Naive thymus-derived CD4-positive, alpha-beta T cell (primary cell): ENCODE measurements at regions of chr5 and their contacts with region 1.

Region 1: GRCh38 chr5:170327168-170327567 is 29.6 kb upstream of the LCP2 start:
- DNase-seq: no peak
- ATAC-seq: no peak
- H3K4me3 ChIP-seq: no peak overlapping the region
- H3K4me3 Mint-ChIP-seq: no peak overlapping the region
- H3K27ac ChIP-seq: no peak overlapping the region
- H3K27ac Mint-ChIP-seq: no peak overlapping the region
- H3K4me1 ChIP-seq: peaks cover 49 to 54% of the 10 kb centered on the region in 2 donors
- H3K4me1 Mint-ChIP-seq: peaks cover 0 to 30% (median 22%) of the 10 kb centered on the region in 7 donors
- H3K27me3 ChIP-seq: no peaks in the 10 kb centered on the region
- H3K27me3 Mint-ChIP-seq: peaks cover 0 to 3% (median 0%) of the 10 kb centered on the region in 5 donors

Region 2: DNA sequence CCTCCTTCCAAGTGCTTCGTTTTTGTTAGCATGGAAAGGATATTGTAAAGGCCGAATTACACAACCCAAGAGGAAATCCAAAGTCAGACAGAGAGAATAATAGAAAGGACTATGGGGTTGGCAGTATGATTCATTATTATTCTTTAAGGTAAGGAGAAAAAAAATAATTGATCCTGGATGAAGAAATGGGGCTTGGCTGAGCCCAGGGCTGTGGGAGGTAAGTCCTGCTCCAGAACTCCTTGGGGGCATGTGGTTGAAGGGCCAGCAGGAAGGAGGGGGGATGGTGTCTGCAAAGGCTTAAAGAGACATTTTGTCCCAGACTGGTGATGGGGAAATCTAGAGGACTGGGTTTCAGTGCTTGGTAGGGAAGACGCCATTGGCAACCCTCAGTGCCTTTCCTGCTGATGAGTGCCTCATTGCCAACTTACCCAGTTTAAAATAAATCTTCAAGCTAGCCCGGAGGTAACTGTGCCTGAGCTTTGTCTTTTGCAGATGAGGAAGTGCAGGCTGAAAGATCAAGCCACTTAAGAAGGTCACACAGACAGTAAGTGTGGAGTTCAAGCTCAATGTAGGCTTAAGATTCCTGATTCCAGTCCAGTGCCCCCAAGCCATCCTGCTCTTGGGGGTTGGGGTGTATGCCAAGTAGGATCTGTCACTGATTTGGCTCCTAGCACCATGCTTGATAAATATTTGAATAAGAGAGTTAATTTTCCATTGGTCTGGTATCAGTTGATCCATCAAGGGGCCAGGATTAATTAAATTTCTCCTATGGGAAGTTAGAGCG is 191.2 kb before region 1 on chr5:
- CTCF ChIA-PET with region 1: no interaction called
- POLR2A ChIA-PET with region 1: no interaction called
- intact Hi-C with region 1: no loop called
- DNase-seq: no peak
- ATAC-seq: no peak
- H3K4me3 ChIP-seq: no peak overlapping the region
- H3K4me3 Mint-ChIP-seq: no peak overlapping the region
- H3K27ac ChIP-seq: no peak overlapping the region
- H3K27ac Mint-ChIP-seq: no peak overlapping the region
- H3K4me1 ChIP-seq: no peaks in the 10 kb centered on the region
- H3K4me1 Mint-ChIP-seq: no peaks in the 10 kb centered on the region
- H3K27me3 ChIP-seq: no peaks in the 10 kb centered on the region
- H3K27me3 Mint-ChIP-seq: peaks cover under 1 to 30% (median 10%) of the 10 kb centered on the region in 5 donors

Region 3: GRCh38 chr5:170159101-170159698 is 168.0 kb before region 1 on chr5:
- CTCF ChIA-PET with region 1: no interaction called
- POLR2A ChIA-PET with region 1: no interaction called
- intact Hi-C with region 1: no loop called
- DNase-seq: no peak
- ATAC-seq: no peak
- H3K4me3 ChIP-seq: no peak overlapping the region
- H3K4me3 Mint-ChIP-seq: no peak overlapping the region
- H3K27ac ChIP-seq: no peak overlapping the region
- H3K27ac Mint-ChIP-seq: no peak overlapping the region
- H3K4me1 ChIP-seq: no peaks in the 10 kb centered on the region
- H3K4me1 Mint-ChIP-seq: no peaks in the 10 kb centered on the region
- H3K27me3 ChIP-seq: no peaks in the 10 kb centered on the region
- H3K27me3 Mint-ChIP-seq: peaks cover 0 to 9% (median 0%) of the 10 kb centered on the region in 5 donors

Region 4: DNA sequence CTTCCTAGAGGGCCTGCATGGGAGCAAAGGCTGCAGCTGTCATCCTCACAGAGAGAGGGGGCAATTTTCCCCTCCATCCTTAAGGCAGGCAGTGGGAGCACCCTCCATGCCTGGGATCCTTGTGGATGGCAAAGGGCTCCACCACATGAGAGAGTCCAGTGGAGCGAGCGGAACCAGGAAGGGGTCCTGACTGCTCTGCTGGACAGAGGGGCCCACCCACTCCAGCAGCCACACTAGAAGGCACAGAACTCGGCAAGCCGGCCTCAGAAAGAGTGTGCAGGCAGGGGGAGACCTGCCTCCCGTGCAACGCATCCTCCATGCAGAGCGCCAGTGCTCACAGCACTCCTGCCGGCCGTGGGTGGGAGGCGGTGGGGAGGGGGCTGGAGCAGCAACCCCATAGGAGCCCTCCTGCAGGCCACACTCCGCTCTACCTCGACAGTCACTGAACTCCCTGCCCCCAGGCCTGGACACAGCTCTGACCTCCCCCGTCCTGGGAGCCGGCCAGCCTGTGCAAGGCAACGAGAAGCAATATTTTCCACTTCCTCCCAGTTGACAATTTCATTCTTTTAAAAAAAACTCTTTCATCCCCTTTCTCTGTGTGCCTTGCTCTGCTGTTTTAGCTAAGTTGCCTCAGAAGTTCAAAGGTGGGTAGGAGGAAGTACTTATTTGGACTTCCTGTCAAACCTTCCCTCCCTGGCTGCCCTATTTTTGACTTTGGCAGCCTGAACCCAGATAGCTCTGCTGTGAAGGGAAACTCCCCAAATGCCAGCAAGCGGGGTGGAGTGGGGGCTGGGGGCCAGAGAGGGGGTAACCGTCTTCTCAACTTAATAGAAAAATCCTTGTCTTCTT is 24.3 kb before region 1 on chr5:
- CTCF ChIA-PET with region 1: interaction called, 120 read pairs
- POLR2A ChIA-PET with region 1: interaction called, 1,119 read pairs
- intact Hi-C with region 1: loop called (anchors 1 kb)
- DNase-seq: peak; percentile 44 to 92 (median 84)
- ATAC-seq: peak; percentile 86
- H3K4me3 ChIP-seq: peak overlapping the region; percentile 54
- H3K4me3 Mint-ChIP-seq: peak overlapping the region; percentile 85 to 99 (median 92)
- H3K27ac ChIP-seq: peak overlapping the region; percentile 79
- H3K27ac Mint-ChIP-seq: peak overlapping the region; percentile 74 to 99 (median 96)
- H3K4me1 ChIP-seq: peaks cover 56 to 61% of the 10 kb centered on the region in 2 donors
- H3K4me1 Mint-ChIP-seq: peaks cover 56 to 98% (median 87%) of the 10 kb centered on the region in 7 donors
- H3K27me3 ChIP-seq: no peaks in the 10 kb centered on the region
- H3K27me3 Mint-ChIP-seq: no peaks in the 10 kb centered on the region

Region 5: GRCh38 chr5:170312666-170313065 is 14.5 kb before region 1 on chr5:
- CTCF ChIA-PET with region 1: interaction called, 8 read pairs
- POLR2A ChIA-PET with region 1: interaction called, 1,119 read pairs
- intact Hi-C with region 1: loop called (anchors 1 kb)
- DNase-seq: peak in 4 of 9 donors; percentile 27 to 85 (median 48)
- ATAC-seq: peak; percentile 87
- H3K4me3 ChIP-seq: peak overlapping the region; percentile 39
- H3K4me3 Mint-ChIP-seq: peak overlapping the region; percentile 66 to 83 (median 75)
- H3K27ac ChIP-seq: peak overlapping the region; percentile 69
- H3K27ac Mint-ChIP-seq: peak overlapping the region; percentile 58 to 97 (median 95)
- H3K4me1 ChIP-seq: peaks cover 29 to 50% of the 10 kb centered on the region in 2 donors
- H3K4me1 Mint-ChIP-seq: peaks cover 38 to 85% (median 70%) of the 10 kb centered on the region in 7 donors
- H3K27me3 ChIP-seq: no peaks in the 10 kb centered on the region
- H3K27me3 Mint-ChIP-seq: no peaks in the 10 kb centered on the region

Region 6: DNA sequence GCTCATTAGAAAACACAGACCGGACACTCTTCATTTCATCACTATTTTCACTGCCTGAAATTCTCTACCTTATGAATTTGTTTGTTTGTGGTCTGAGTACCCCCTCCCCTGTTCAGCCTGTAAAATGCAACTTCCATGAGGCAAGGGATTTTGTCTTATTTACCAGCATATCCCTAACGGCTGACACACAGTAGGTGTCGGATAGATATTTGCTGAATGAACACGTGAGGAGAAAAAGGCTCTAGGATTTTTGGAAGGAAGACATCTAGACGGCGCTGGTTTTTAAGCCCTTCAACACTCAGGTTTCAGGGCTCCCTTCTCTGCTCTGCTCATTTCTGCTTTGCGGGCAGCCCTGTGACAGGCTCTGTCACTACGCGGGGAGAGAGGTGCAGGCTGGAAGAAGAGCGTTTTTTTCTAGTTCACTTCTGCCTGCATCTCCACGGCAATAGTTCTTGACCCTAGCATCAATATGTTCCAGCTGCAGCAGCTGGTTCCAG is 21.0 kb after region 1 on chr5:
- CTCF ChIA-PET with region 1: no interaction called
- POLR2A ChIA-PET with region 1: no interaction called
- intact Hi-C with region 1: no loop called
- DNase-seq: no peak
- ATAC-seq: no peak
- H3K4me3 ChIP-seq: no peak overlapping the region
- H3K4me3 Mint-ChIP-seq: peak overlapping the region in 1 of 10 donors; percentile 12
- H3K27ac ChIP-seq: no peak overlapping the region
- H3K27ac Mint-ChIP-seq: peak overlapping the region in 1 of 9 donors; percentile 11
- H3K4me1 ChIP-seq: no peaks in the 10 kb centered on the region
- H3K4me1 Mint-ChIP-seq: peaks cover 0 to 11% (median 3%) of the 10 kb centered on the region in 7 donors
- H3K27me3 ChIP-seq: no peaks in the 10 kb centered on the region
- H3K27me3 Mint-ChIP-seq: peaks cover 12 to 63% (median 18%) of the 10 kb centered on the region in 5 donors